Body of pancreas (tissue), 4 donors: ENCODE measurements at regions of chr12 and their contacts with region 1.

Region 1: DNA sequence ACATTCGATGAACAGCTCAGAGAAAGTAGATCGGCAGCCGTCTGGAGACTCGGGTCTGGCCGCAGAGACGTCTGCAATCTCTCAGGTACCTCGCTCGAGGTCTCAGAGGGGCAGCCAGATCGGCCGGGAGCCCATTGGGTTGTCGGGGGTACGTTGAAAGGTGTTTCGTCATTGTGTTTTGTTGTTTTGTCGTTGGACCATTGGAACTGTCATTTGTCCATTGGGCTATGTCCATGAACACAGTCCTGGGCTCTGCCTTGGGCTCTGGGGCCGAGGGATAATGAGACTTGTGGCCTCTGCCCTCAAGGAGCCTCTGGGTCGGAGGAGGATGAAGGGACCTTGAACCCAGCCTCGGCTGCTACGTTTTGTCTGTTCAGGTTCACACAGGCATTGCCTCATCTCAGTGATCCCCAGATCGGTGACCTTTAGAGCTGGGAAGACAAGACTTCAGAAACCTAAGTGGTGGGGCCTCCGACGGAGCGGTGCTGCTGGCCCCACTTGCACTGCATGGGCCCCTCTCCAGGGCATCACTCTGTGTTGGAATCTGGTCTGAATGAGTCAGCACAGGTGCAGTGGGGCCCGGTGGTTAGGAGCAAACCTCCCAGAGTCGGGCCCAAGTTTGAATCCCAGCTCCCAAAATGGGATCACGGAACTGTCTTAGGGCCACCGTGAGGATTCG is 23.6 kb upstream of the MLXIP start:
- DNase-seq: no peak
- ATAC-seq: no peak
- H3K4me3 ChIP-seq: no peak overlapping the region
- H3K27ac ChIP-seq: peak overlapping the region in 1 of 4 donors; percentile 13
- H3K4me1 ChIP-seq: peaks cover 34% of the 10 kb centered on the region
- H3K27me3 ChIP-seq: no peaks in the 10 kb centered on the region
- CTCF ChIP-seq: no peak
- POLR2A ChIP-seq: no peak

Region 2: DNA sequence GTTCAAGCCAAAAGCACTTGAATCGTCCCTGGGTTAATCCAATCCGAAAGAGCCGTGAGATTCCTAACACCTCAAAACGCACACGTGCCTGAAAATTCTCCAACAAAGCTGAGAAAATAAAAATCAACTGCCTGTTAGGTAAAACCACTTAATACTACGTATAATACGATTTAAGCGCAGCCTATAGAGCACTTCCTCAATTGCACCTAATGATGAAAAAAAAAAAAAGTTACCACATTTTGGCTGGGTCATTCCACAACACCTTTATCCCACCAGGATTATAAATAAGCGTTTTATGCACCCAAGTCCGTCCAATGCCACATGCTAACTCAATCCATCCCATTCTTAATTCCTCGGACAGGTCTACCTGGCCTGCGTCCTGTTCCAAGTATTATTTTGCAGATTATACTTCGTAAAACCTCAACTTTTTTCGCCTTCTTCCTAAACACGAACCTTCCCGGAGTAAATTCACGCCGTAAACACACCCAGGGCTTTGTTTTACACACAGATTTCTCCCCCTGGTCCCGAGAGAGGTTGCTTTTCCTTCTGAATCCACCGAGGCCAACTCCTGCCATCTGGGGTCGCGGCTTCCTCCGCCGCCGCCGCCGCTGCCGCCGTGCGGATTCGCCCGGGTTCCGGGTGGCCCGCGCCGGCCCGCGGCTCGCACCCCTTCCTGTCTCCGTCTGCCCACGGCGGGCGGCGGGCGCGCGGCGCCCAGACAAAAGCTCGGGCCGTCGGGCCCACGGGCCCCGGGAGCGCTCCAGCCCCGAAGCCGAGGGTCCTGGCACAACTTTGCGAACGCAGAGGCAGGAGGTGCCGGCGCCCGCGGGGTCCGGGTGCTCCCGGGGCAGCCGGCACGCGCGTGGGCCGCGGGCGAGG is 588.8 kb before region 1 on chr12:
- intact Hi-C with region 1: no loop called
- DNase-seq: peak in 2 of 4 donors; percentile 27 to 30
- ATAC-seq: peak; percentile 6
- H3K4me3 ChIP-seq: no peak overlapping the region
- H3K27ac ChIP-seq: peak overlapping the region in 1 of 4 donors; percentile 62
- H3K4me1 ChIP-seq: peaks cover 21% of the 10 kb centered on the region
- H3K27me3 ChIP-seq: no peaks in the 10 kb centered on the region
- CTCF ChIP-seq: no peak
- POLR2A ChIP-seq: no peak

Region 3: DNA sequence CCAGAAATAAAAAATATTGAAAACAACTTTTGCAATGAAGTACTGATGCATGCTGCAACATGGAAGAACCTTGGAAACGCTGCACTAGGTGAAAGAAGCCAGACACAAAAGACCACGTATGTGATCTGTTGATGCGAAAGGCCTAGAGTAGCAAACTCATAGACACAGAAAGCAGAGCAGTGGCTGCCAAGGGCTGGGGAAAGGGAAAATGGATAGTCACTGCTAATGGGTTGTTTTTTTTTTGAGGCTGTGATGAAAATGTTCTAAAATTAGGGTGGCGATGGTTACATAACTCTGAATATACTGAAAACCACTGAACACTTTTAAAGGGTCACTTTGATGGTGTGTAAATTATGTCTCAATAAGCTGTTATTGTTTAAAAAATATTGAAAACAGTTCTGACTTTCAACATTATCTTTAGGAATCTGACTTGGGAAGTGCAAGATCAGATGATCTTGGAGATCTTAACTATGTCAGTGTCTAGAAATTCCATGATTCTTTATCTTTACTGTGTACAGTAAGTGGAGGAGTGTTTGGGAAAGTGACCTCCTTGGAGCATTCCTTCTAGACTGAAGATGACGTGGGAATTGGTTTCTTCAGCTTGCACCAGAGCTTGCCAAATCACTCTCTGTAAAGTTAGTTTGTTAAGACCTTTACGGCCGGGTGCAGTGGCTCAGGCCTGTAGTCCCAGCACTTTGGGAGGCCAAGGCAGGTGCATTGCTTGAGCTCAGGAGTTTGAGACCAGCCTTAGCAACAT is 36.0 kb after region 1 on chr12:
- intact Hi-C with region 1: loop called (anchors 5 kb)
- DNase-seq: peak in 2 of 4 donors; percentile 32 to 40
- ATAC-seq: peak; percentile 45
- H3K4me3 ChIP-seq: no peak overlapping the region
- H3K27ac ChIP-seq: peak overlapping the region; percentile 39 to 68 (median 50)
- H3K4me1 ChIP-seq: peaks cover 96% of the 10 kb centered on the region
- H3K27me3 ChIP-seq: no peaks in the 10 kb centered on the region
- CTCF ChIP-seq: no peak
- POLR2A ChIP-seq: no peak

Region 4: GRCh38 chr12:122125452-122126341 is 70.7 kb after region 1 on chr12:
- intact Hi-C with region 1: loop called (anchors 2 kb)
- DNase-seq: no peak
- ATAC-seq: no peak
- H3K4me3 ChIP-seq: no peak overlapping the region
- H3K27ac ChIP-seq: no peak overlapping the region
- H3K4me1 ChIP-seq: peaks cover 45% of the 10 kb centered on the region
- H3K27me3 ChIP-seq: no peaks in the 10 kb centered on the region
- CTCF ChIP-seq: no peak
- POLR2A ChIP-seq: no peak

Region 5: GRCh38 chr12:122190842-122191668 is 136.1 kb after region 1 on chr12:
- intact Hi-C with region 1: loop called (anchors 5 kb)
- DNase-seq: peak; percentile 74 to 83 (median 79)
- ATAC-seq: peak; percentile 92
- H3K4me3 ChIP-seq: no peak overlapping the region
- H3K27ac ChIP-seq: no peak overlapping the region
- H3K4me1 ChIP-seq: no peaks in the 10 kb centered on the region
- H3K27me3 ChIP-seq: no peaks in the 10 kb centered on the region
- CTCF ChIP-seq: peak; percentile 69 to 88 (median 84)
- POLR2A ChIP-seq: no peak